Activated B cell treated with CpG ODN at 0.5 μM for 24 hours (primary cell): ENCODE measurements at regions of chr17 and their contacts with region 1.

Region 1: GRCh38 chr17:56707312-56708219 is 114.1 kb downstream of the NOG start:
- DNase-seq: no peak
- ATAC-seq: no peak
- H3K4me3 Mint-ChIP-seq: no peak overlapping the region
- H3K27ac Mint-ChIP-seq: no peak overlapping the region
- H3K4me1 Mint-ChIP-seq: no peaks in the 10 kb centered on the region
- H3K27me3 Mint-ChIP-seq: peaks cover 8% of the 10 kb centered on the region
- CTCF ChIP-seq: no peak

Region 2: GRCh38 chr17:56679115-56679766 is 28.3 kb before region 1 on chr17:
- CTCF ChIA-PET with region 1: no interaction called
- POLR2A ChIA-PET with region 1: no interaction called
- intact Hi-C with region 1: no loop called
- DNase-seq: no peak
- ATAC-seq: no peak
- H3K4me3 Mint-ChIP-seq: peak overlapping the region; percentile 62
- H3K27ac Mint-ChIP-seq: no peak overlapping the region
- H3K4me1 Mint-ChIP-seq: peaks cover 9% of the 10 kb centered on the region
- H3K27me3 Mint-ChIP-seq: peaks cover 47% of the 10 kb centered on the region
- CTCF ChIP-seq: no peak

Region 3: GRCh38 chr17:57311281-57312216 is 604.0 kb after region 1 on chr17:
- CTCF ChIA-PET with region 1: no interaction called
- POLR2A ChIA-PET with region 1: no interaction called
- intact Hi-C with region 1: loop called (anchors 10 kb)
- DNase-seq: no peak
- ATAC-seq: no peak
- H3K4me3 Mint-ChIP-seq: no peak overlapping the region
- H3K27ac Mint-ChIP-seq: peak overlapping the region; percentile 39
- H3K4me1 Mint-ChIP-seq: peaks cover 3% of the 10 kb centered on the region
- H3K27me3 Mint-ChIP-seq: no peaks in the 10 kb centered on the region
- CTCF ChIP-seq: no peak